CD8-positive, alpha-beta memory T cell (primary cell): ENCODE measurements at regions of chr12 and their contacts with region 1.

Region 1: DNA sequence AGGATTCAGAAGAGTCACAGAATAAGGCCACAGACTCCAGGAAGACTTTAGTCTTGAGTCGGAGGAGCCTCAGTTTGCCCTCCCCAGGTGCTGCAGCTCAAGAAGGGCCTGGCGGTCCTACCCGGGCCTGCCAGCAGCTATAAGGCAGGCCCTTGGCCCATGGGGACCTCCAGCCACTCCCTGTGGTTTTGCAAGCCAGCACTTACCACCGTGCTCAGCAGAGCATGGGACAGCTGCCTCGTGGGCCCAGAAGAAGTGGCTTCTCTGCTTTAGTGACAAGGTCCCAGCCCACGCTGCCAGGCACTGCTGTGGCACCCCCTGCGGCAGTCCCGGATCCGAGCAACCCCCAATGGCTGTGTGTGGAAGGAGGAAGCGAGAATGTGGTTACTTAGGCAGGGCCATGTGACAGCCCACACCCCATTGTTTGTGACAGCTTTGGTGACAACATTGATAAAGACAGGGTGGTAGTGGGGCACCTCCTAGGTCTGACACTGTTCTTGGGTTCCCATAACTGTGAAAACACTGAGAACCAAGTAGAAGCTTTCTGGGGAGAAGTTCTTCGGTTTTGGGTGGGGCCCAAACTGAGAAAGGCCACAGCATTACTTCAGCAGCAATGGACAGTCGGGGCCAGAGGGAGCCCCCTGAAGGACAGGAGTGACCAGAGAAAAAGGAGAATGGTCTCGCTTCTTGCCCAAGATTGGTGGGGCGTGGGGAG is at the start of gene SELPLG:
- DNase-seq: peak; percentile 80 to 95 (median 95)
- H3K4me3 ChIP-seq: peak within 1 kb of the TSS; percentile 87
- H3K4me3 Mint-ChIP-seq: peak within 1 kb of the TSS; percentile 91 to 100 (median 98)
- H3K27ac ChIP-seq: peak within 1 kb of the TSS; percentile 92
- H3K27ac Mint-ChIP-seq: peak within 1 kb of the TSS; percentile 92 to 100 (median 99)
- H3K4me1 ChIP-seq: peaks cover 66% of the 10 kb centered on the region
- H3K4me1 Mint-ChIP-seq: peaks cover 56 to 75% (median 69%) of the 10 kb centered on the region in 3 donors
- H3K27me3 ChIP-seq: no peaks in the 10 kb centered on the region
- H3K27me3 Mint-ChIP-seq: peaks cover 0 to 4% of the 10 kb centered on the region in 2 donors
- total RNA-seq, gene SELPLG: 37.0 to 37.7 TPM

Region 2: GRCh38 chr12:108562348-108563135 is 71.1 kb before region 1 on chr12 and contains the start of gene ISCU:
- CTCF ChIA-PET with region 1: interaction called, 8 read pairs
- POLR2A ChIA-PET with region 1: interaction called, 67 read pairs
- DNase-seq: peak; percentile 98 to 100 (median 99)
- H3K4me3 ChIP-seq: peak within 1 kb of the TSS; percentile 96
- H3K4me3 Mint-ChIP-seq: peak within 1 kb of the TSS; percentile 98 to 100 (median 100)
- H3K27ac ChIP-seq: peak within 1 kb of the TSS; percentile 93
- H3K27ac Mint-ChIP-seq: peak within 1 kb of the TSS; percentile 97 to 100 (median 100)
- H3K4me1 ChIP-seq: peaks cover 59% of the 10 kb centered on the region
- H3K4me1 Mint-ChIP-seq: peaks cover 50 to 83% (median 76%) of the 10 kb centered on the region in 3 donors
- H3K27me3 ChIP-seq: no peaks in the 10 kb centered on the region
- H3K27me3 Mint-ChIP-seq: no peaks in the 10 kb centered on the region
- total RNA-seq, gene ISCU: 113 to 116 TPM

Region 3: DNA sequence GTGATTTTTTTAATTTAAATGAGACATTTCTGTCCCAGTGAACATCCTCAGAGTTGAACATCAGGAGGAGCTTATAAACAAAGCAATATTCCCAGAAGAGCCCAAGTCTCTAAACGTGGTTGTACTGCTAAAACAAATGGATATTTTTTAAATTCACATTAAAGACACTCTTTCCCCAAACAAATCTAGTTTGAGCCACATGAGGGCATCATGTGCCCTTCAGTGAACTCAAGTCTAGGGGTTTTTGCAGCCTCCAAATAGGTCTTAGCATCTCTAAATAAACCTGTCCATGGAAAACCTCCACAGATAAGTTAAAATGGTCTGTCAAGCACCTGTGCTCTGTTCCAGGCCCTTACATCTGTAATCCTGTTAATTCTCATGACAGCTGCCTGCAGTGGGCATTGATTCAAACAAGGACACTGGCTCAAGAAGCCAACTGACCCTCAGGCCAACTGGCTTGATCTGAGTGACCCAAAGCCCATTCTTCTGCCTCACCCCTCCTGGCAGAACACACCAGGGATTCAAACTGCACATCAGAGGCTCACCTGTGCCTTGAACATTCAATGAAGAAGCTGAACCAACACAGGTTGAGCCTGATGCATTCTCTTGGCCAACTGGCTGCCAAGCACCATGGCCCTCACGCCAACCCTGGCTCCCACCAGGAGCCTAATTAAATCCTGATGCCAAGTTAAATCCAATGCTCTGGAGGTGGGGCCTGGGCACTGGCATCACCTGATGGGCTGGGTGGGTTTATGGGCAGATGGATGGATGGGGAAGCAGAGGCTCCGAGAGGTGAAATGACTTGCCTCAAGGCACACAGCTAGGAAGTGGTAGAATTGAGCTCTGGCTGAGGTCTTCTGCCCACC is 62.7 kb before region 1 on chr12:
- CTCF ChIA-PET with region 1: interaction called, 11 read pairs
- POLR2A ChIA-PET with region 1: interaction called, 6 read pairs
- DNase-seq: no peak
- H3K4me3 ChIP-seq: no peak overlapping the region
- H3K4me3 Mint-ChIP-seq: no peak overlapping the region
- H3K27ac ChIP-seq: no peak overlapping the region
- H3K27ac Mint-ChIP-seq: peak overlapping the region; percentile 61 to 95 (median 86)
- H3K4me1 ChIP-seq: peaks cover 56% of the 10 kb centered on the region
- H3K4me1 Mint-ChIP-seq: peaks cover 26 to 86% (median 71%) of the 10 kb centered on the region in 3 donors
- H3K27me3 ChIP-seq: no peaks in the 10 kb centered on the region
- H3K27me3 Mint-ChIP-seq: no peaks in the 10 kb centered on the region

Region 4: DNA sequence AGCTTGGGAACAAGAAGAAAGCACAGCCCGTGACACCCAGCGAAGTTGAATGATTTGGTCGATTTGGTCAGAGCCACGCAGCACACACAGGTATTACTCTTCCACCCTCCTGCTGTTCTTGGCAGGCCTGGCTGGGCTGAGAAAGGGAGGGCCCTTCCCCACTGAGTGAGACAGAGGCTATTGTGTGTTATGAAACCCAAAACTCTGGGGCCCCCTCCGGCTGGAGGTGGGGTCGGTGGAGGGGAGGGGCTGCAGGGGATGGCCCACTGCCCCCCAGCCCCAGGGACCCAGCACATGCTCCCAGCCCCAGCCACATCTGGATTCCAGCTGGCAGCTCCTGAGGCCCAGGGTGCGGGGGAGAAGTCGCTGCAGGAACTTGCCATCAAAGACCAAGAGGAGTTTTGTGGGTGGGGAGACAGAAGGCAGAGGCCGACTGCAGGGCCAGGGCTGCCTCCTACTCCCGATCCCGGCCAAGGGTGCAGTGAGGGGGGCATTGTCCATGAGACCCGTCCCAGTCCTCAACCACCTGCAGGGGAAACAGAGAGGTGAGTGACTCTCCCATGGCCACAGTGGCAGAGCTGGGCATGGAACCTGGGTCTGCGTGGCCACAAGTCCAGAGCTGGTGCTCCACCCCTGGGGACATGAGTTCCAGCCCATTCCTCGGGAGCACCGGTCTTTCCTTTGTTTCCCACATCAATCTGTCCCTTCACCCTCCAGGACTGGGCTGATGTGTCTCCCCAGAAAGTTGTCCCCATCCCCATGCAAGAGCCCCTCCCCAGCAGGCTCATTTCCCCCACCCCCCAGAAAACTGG is 44.5 kb before region 1 on chr12:
- CTCF ChIA-PET with region 1: no interaction called
- POLR2A ChIA-PET with region 1: no interaction called
- DNase-seq: peak in 1 of 5 donors; percentile 30
- H3K4me3 ChIP-seq: no peak overlapping the region
- H3K4me3 Mint-ChIP-seq: no peak overlapping the region
- H3K27ac ChIP-seq: no peak overlapping the region
- H3K27ac Mint-ChIP-seq: no peak overlapping the region
- H3K4me1 ChIP-seq: no peaks in the 10 kb centered on the region
- H3K4me1 Mint-ChIP-seq: no peaks in the 10 kb centered on the region
- H3K27me3 ChIP-seq: no peaks in the 10 kb centered on the region
- H3K27me3 Mint-ChIP-seq: peaks cover 0 to 2% of the 10 kb centered on the region in 2 donors

Region 5: DNA sequence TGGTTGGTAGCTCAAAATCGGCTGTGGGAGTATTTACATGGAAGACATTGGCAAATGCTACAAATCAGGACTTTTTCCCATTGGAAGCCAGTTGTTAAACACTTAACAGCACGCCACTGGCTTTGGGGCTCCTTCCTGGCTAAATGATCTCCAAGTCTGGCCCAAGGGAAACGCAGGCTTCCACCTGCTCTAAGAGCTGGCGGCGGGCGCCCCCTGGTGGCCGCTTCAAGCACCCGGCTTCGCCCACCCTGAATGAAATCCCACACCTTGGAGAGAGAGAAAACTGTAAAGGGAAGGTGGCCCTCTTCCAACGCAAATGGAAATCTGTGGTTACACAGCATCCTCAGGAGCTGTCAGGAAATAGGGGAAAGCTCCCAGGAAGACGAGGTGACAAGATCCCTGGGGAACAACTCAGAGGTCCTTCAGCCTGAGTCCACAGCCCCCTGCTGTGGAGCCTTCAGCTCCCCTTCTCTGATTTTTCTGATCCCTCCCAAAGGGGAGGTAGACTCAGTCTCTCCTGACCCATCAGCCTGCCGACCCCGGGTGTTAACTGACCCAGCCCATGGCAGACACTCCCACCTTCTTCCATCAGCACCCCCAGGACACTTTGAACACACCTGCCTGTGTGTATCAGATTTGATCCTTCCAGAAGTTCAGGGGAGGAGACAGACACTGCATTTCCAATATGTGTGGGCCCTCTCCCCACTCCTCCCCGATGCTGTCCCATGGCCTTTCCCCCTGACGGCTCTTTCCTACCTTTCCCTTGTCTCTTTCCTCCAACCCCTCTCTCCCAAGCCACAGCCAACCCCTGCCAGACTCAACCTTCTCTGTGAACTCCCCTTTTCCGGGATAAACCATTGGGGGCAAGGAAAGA is 15.4 kb before region 1 on chr12:
- CTCF ChIA-PET with region 1: interaction called, 330 read pairs
- POLR2A ChIA-PET with region 1: interaction called, 79 read pairs
- DNase-seq: peak; percentile 68 to 82 (median 75)
- H3K4me3 ChIP-seq: no peak overlapping the region
- H3K4me3 Mint-ChIP-seq: peak overlapping the region; percentile 9 to 50 (median 37)
- H3K27ac ChIP-seq: no peak overlapping the region
- H3K27ac Mint-ChIP-seq: peak overlapping the region; percentile 83 to 100 (median 96)
- H3K4me1 ChIP-seq: peaks cover 56% of the 10 kb centered on the region
- H3K4me1 Mint-ChIP-seq: peaks cover 62 to 83% (median 70%) of the 10 kb centered on the region in 3 donors
- H3K27me3 ChIP-seq: no peaks in the 10 kb centered on the region
- H3K27me3 Mint-ChIP-seq: no peaks in the 10 kb centered on the region

Region 6: GRCh38 chr12:108643941-108644810 is 10.5 kb after region 1 on chr12:
- CTCF ChIA-PET with region 1: interaction called, 38 read pairs
- POLR2A ChIA-PET with region 1: interaction called, 5 read pairs
- DNase-seq: no peak
- H3K4me3 ChIP-seq: no peak overlapping the region
- H3K4me3 Mint-ChIP-seq: no peak overlapping the region
- H3K27ac ChIP-seq: no peak overlapping the region
- H3K27ac Mint-ChIP-seq: peak overlapping the region in 1 of 8 donors; percentile 60
- H3K4me1 ChIP-seq: peaks cover 20% of the 10 kb centered on the region
- H3K4me1 Mint-ChIP-seq: peaks cover 17 to 32% (median 29%) of the 10 kb centered on the region in 3 donors
- H3K27me3 ChIP-seq: no peaks in the 10 kb centered on the region
- H3K27me3 Mint-ChIP-seq: no peaks in the 10 kb centered on the region

Region 7: GRCh38 chr12:108722992-108723766 is 89.5 kb after region 1 on chr12:
- CTCF ChIA-PET with region 1: no interaction called
- POLR2A ChIA-PET with region 1: no interaction called
- DNase-seq: no peak
- H3K4me3 ChIP-seq: no peak overlapping the region
- H3K4me3 Mint-ChIP-seq: no peak overlapping the region
- H3K27ac ChIP-seq: no peak overlapping the region
- H3K27ac Mint-ChIP-seq: peak overlapping the region in 2 of 8 donors; percentile 2 to 48
- H3K4me1 ChIP-seq: no peaks in the 10 kb centered on the region
- H3K4me1 Mint-ChIP-seq: peaks cover 13 to 28% (median 19%) of the 10 kb centered on the region in 3 donors
- H3K27me3 ChIP-seq: no peaks in the 10 kb centered on the region
- H3K27me3 Mint-ChIP-seq: peaks cover 0 to 3% of the 10 kb centered on the region in 2 donors

Region 8: DNA sequence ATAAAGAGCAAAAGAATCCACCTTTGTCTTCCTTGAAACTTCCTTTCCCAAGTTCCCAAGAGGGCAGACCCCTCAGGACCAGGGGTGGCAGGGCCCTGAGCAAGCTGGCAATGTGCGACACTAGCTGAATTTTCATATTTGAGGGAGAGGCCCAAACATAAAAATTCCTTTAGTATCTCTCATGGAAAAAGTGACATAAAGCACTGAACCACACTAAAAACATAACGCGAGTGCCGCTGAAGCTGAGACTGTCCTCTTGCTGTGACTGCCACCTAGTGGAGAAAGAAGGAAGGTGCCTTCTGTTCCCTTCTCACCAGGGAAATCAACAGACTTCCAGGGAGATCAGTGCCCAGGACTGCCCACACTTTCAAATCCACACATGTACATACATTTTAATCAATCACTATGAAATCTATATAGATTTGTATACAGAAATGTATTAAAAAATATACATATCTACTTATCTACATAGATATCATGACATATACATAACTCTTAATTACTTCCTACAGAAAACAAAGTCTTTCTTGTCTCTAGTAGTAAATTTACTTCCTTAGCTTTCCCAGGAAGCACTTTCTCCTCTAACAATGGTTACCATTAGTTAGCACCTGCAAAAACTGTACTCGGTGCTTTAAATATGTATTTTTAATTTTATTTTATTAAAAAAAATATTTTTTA is 169.9 kb after region 1 on chr12:
- CTCF ChIA-PET with region 1: interaction called, 13 read pairs
- POLR2A ChIA-PET with region 1: no interaction called
- DNase-seq: peak; percentile 50 to 78 (median 65)
- H3K4me3 ChIP-seq: no peak overlapping the region
- H3K4me3 Mint-ChIP-seq: no peak overlapping the region
- H3K27ac ChIP-seq: no peak overlapping the region
- H3K27ac Mint-ChIP-seq: peak overlapping the region in 3 of 8 donors; percentile 33 to 63 (median 50)
- H3K4me1 ChIP-seq: peaks cover 5% of the 10 kb centered on the region
- H3K4me1 Mint-ChIP-seq: peaks cover 4 to 8% (median 5%) of the 10 kb centered on the region in 3 donors
- H3K27me3 ChIP-seq: no peaks in the 10 kb centered on the region
- H3K27me3 Mint-ChIP-seq: no peaks in the 10 kb centered on the region